Sciatic nerve (tissue), 2 donors: ENCODE measurements at regions of chr16 and their contacts with region 1.

Region 1: DNA sequence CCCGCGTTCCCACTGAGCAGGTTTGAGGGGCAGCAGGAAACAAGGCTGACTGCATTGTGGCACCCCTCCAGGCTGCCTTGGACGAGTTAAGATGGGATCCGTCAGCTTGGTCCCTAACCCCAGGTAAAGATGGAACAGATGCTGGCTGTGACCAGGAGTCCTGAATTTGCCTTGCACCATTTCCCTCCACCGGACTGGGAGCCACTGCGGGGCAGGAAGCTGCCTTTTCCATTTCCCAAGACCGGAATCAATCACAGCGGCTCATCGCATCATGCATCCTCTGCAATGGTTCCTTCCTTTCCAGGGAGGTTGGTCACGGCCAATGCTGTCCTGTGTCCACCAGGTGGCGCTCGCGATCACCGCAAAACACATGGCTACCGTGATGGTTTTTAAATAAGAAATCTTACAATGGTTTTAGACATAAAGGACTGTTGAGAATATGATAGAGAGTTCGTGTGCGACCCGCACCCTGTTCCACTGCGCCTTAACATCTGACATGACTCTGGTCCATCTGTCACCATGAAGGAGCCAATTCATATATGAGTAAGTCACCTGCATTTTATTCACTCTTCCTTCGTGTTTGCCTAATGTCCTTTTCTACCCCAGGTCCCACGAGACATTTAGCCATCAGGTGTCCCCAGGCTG is 6.8 kb upstream of the MEAK7 start:
- DNase-seq: peak; percentile 93
- ATAC-seq: peak; percentile 86

Region 2: GRCh38 chr16:84380405-84380804 is 130.9 kb before region 1 on chr16:
- intact Hi-C with region 1: no loop called
- DNase-seq: no peak
- ATAC-seq: peak; percentile 76

Region 3: DNA sequence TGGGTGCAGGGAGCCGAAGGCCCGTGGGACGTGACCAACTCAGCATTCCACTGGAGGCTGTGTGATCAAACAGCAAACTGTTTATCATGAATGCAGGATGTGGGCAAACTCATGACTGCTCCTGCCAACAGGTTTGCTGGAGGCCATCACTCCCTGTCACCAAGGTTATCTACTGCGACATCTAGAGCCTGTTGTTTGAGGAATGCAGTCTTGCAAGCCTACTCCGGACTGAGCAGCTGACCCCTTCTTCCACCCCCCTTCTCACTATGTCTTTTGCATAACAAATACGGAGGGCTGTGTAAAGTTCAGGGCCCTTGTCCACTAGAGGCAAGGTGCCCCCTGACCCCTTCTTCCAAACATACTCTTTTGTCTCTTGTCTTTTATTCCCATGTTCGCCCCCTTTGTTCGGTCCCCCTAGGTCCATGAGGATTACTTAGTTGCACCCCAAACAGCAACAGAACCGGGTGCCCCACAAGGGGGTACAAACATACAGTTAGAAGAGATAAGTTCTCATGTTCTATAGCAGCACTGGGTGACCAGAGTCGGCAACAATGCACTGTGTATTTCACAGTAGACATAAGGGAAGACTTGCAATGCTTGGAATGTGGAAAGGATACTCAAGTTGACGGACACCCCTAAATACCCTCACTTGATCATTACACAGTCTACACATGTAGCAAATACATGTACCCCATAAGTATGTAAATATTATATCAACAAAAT is 35.5 kb before region 1 on chr16:
- intact Hi-C with region 1: no loop called
- DNase-seq: no peak
- ATAC-seq: no peak

Region 4: GRCh38 chr16:84617791-84618580 is 106.7 kb after region 1 on chr16 and contains the start of gene COTL1:
- intact Hi-C with region 1: loop called (anchors 2 kb)
- DNase-seq: peak; percentile 99
- ATAC-seq: peak; percentile 96
- total RNA-seq, gene COTL1: 77.9 TPM

Region 5: GRCh38 chr16:84714028-84714427 is 202.7 kb after region 1 on chr16:
- intact Hi-C with region 1: loop called (anchors 10 kb)
- DNase-seq: no peak
- ATAC-seq: no peak